HepG2 (cell line): ENCODE measurements at regions of chr15 and their contacts with region 1.

Region 1: GRCh38 chr15:90265271-90266060 is at the start of gene NGRN:
- DNase-seq: peak; percentile 83
- ATAC-seq: peak; percentile 93
- H3K4me3 ChIP-seq: peak within 1 kb of the TSS; percentile 71 to 78 (median 72)
- H3K27ac ChIP-seq: peak within 1 kb of the TSS; percentile 83
- H3K4me1 ChIP-seq: peaks cover 62% of the 10 kb centered on the region
- H3K27me3 ChIP-seq: no peaks in the 10 kb centered on the region; a peak in 1 of 5 replicates
- CTCF ChIP-seq: no peak
- EP300 ChIP-seq: no peak
- POLR2A ChIP-seq: peak; percentile 96 to 99
- RAD21 ChIP-seq: peak; percentile 57; the same call in 1 of the 2 replicates
- total RNA-seq, gene NGRN: 63.7 and 77.7 TPM in 2 replicates

Region 2: GRCh38 chr15:90249203-90249863 is 16.1 kb before region 1 on chr15 and contains the start of gene TTLL13:
- CTCF ChIA-PET with region 1: no interaction called
- POLR2A ChIA-PET with region 1: interaction called, 20 read pairs
- in situ Hi-C with region 1: no loop called
- intact Hi-C with region 1: loop called (anchors 2 kb)
- DNase-seq: peak; percentile 89
- ATAC-seq: peak; percentile 94
- H3K4me3 ChIP-seq: peak within 1 kb of the TSS; percentile 62 to 79 (median 73); a peak in 5 of 6 replicates
- H3K27ac ChIP-seq: peak within 1 kb of the TSS; percentile 60
- H3K4me1 ChIP-seq: peaks cover 56% of the 10 kb centered on the region
- H3K27me3 ChIP-seq: no peaks in the 10 kb centered on the region
- CTCF ChIP-seq: peak; percentile 35
- EP300 ChIP-seq: no peak
- POLR2A ChIP-seq: peak; percentile 64 to 84
- RAD21 ChIP-seq: peak; percentile 24; the same call in 1 of the 2 replicates
- total RNA-seq, gene TTLL13: 0.29 TPM in 1 of 2 replicates, not detected in the other

Region 3: DNA sequence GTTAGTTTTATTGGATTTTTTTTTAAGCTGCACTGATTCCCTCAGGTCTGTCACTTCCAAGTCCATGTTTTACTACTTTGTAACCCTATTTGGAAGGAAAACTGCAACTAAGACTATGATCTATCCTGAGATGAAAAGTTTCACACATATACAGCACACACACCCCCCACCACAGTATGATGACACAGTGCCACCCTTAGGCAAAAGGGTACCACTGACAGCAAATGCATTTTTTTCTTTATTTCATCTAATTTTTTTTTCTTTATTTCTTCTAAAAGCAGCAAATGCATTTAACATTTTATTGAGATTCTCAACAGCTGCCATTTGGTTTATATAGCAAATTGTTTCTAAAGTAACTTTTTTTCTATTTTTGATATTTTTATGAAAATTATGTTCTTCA is 21.2 kb after region 1 on chr15:
- CTCF ChIA-PET with region 1: no interaction called
- POLR2A ChIA-PET with region 1: no interaction called
- in situ Hi-C with region 1: no loop called
- intact Hi-C with region 1: no loop called
- DNase-seq: peak; percentile 43
- ATAC-seq: peak; percentile 74
- H3K4me3 ChIP-seq: no peak overlapping the region
- H3K27ac ChIP-seq: no peak overlapping the region
- H3K4me1 ChIP-seq: peaks cover 9% of the 10 kb centered on the region
- H3K27me3 ChIP-seq: no peaks in the 10 kb centered on the region; a peak in 1 of 5 replicates
- CTCF ChIP-seq: peak; percentile 70
- EP300 ChIP-seq: no peak
- POLR2A ChIP-seq: no peak
- RAD21 ChIP-seq: no peak

Region 4: GRCh38 chr15:90336705-90337141 is 71.3 kb after region 1 on chr15:
- CTCF ChIA-PET with region 1: no interaction called
- POLR2A ChIA-PET with region 1: no interaction called
- in situ Hi-C with region 1: no loop called
- intact Hi-C with region 1: no loop called
- DNase-seq: no peak
- ATAC-seq: no peak
- H3K4me3 ChIP-seq: no peak overlapping the region
- H3K27ac ChIP-seq: no peak overlapping the region
- H3K4me1 ChIP-seq: peaks cover 25% of the 10 kb centered on the region
- H3K27me3 ChIP-seq: no peaks in the 10 kb centered on the region
- CTCF ChIP-seq: no peak
- EP300 ChIP-seq: no peak
- POLR2A ChIP-seq: no peak
- RAD21 ChIP-seq: no peak